Dendritic cell treated with granulocyte-macrophage colony-stimulating factor and Interleukin-4, amounts not matched to agents 40 ng/mL and 50 ng/mL, for 4 days (primary cell): ENCODE measurements at regions of chr21 and their contacts with region 1.

Region 1: DNA sequence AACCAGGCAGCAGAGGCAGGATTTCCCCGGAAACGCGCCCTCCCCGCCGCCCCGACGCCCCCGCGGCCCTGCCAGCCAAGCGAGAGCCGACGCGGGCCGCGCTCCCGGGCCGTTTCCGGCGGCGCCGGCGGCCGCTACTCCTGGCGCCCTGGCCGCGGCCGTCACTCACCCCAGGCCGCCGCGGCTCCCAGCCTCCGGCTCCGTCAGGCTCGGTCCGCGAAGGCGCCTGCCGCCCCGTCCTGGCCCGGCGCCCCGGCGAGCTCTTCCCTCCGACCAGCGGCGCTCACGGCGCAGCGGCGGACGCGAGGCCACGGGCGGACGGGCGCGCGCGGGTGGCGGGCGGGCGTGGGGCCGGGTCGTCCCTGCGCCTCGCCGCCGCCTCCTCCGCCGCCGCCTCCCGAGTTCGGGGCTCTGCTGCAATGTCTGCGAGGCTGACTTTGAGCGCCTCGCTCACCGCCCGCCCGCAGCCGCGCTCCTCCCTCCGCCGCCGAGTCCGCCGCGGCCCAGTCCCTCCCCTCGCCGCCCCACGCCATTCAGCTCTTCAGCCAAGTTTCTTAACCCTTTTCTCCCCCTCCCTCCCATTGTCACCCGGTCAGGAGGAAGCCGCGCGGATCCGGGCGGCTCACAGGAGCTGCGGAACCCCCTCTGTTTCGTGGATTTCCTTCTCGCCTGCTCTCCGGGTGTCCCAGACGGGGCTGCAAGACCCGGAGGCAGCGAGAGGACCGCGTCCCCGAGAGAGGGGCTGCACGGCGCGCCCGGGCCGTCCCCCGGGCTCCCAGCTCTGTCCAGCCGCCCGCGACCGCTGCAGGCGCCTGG is at the start of gene NRIP1:
- H3K4me3 Mint-ChIP-seq: peak within 1 kb of the TSS; percentile 91
- H3K27ac Mint-ChIP-seq: peak within 1 kb of the TSS; percentile 86
- H3K4me1 Mint-ChIP-seq: peaks cover 48% of the 10 kb centered on the region
- H3K27me3 Mint-ChIP-seq: no peaks in the 10 kb centered on the region

Region 2: DNA sequence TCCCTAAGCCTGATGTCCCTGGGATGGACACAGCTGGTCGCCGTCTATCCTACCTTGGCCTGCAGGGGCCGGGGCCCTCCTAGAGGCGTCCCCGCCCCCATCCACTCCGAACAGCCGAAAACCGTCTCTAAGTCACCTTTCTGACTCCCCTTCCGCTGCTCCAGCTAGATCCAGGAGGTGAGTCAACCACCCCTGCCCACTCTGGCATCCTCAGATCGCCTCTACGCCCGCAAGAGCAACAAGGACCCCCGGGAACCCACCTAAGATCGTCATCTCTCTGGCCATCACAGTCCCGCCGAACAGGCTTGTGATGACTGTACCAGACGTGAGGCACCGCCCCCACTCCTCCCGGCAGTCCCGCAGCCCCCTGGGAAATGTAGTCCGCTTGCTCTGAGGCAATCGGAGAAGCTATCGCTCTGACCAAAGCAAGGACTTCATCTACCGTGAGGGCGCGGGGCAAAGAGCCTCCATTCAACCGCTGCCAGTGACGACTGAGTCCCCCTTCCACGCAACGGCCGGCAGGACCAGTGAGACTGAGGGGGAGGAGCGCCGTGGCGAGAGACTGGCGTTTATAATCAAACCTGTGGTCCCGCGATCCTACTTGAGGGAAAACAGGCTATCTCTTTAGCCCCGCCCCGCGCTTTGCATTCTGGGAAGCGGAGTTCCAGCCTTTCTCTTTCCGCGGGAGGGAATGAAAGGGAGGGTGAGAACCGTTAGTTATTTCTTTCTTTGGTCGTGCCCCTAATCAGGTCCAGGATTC is 681.8 kb before region 1 on chr21 and contains the start of gene HSPA13:
- intact Hi-C with region 1: loop called (anchors 2 kb)
- H3K4me3 Mint-ChIP-seq: peak within 1 kb of the TSS; percentile 100
- H3K27ac Mint-ChIP-seq: peak within 1 kb of the TSS; percentile 97
- H3K4me1 Mint-ChIP-seq: peaks cover 21% of the 10 kb centered on the region
- H3K27me3 Mint-ChIP-seq: no peaks in the 10 kb centered on the region

Region 3: DNA sequence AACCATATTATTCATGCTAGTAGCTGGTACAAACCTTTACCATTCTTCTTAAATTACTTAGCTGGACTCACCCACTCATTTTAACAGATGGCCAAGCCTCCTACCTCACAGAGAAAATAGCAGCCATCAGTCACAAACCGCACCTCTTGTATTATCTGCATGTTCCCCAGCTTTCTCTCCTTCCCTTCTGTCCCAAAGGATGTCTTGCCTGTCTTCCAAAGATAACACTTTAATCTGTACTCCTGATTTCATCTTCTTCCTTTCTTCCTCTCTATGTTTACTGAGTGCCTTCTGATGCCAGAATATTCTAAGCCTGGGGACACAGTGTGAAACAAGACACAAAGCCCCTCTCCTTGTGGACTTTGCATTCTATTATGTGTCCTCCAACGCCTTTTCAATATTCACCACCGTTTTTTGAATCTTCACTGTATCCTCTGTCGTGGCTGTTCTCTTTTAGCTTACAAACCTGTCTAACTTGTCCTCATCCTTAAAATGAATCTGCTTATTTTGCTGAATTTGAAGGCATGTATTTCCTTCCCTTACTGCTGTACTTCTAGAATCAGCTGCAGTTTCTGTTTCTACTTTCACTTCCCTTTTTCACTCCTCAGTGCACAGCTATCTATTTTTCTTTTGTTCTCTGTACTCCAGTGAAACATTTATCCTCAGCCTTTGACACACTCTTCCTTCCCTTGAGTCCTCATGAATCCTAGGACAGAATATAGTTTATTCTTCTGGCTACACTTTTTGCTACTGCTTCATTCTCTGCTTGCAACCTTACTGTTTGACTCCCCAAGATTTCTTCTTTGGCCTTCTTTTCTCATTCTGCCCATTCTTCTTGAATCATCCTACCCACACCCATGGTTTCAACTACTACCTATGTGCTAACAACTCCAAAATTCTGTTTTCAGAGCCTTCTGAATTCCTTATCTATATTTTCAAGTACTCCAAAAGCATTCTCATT is 301.8 kb before region 1 on chr21:
- intact Hi-C with region 1: loop called (anchors 10 kb)
- H3K4me3 Mint-ChIP-seq: no peak overlapping the region
- H3K27ac Mint-ChIP-seq: no peak overlapping the region
- H3K4me1 Mint-ChIP-seq: peaks cover 6% of the 10 kb centered on the region
- H3K27me3 Mint-ChIP-seq: no peaks in the 10 kb centered on the region

Region 4: DNA sequence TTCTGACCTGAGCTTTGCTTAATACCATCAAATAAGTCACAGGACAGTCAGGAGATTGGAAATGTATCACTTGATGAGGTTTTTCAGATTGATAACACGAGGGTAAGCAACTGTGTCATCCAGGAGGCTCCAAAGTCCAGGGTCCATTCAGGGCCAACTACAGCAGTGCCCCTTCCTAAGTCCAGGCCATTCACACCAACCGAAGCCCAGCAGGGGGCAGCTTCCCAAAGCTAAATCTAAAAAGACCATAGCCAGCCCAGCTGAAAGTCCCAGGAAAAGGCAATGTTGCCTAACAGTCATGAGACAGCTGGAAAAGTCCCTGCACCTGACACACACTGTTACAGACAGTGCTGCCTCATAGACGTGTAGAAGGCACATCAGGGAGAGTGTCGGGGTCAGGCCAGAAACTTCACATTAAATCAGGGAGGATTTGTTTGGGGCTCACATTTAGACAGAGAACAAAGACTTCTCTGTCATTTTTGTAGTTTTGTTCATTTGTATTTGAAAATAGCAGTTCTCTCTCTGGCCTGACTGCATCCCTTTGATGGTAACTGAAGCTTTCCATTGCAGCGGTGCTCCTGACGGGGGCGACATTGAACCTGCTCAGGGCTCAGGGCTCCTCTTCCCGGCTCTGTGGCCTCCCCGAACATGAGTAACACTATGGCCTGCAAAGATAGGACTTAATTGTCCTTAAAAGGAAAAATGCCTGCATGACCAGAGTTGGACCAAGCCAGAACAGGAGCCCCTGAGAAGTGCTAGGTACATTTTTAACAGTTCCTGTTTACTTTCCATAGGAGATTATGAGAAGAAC is 200.4 kb before region 1 on chr21:
- intact Hi-C with region 1: loop called (anchors 2 kb)
- H3K4me3 Mint-ChIP-seq: no peak overlapping the region
- H3K27ac Mint-ChIP-seq: peak overlapping the region; percentile 32
- H3K4me1 Mint-ChIP-seq: peaks cover 55% of the 10 kb centered on the region
- H3K27me3 Mint-ChIP-seq: no peaks in the 10 kb centered on the region

Region 5: DNA sequence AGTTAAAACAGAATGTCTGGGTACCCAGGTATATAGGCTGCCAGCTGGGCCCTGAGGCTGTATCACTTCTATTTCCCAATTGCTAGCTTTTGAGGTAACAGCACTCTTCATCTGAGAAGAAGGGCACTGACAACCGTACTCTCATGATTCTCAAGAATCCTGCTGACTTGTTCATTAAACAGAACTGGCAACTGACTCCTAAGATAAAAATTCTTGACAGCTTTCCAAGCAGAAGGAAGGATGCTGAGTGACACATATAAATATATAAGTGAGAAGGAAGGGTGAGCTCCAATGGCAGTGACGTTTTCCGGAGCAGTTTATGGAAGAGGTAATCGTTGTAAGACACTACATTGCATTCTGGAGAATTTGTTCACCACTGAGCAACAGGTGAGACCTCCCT is 48.1 kb after region 1 on chr21:
- intact Hi-C with region 1: no loop called
- H3K4me3 Mint-ChIP-seq: no peak overlapping the region
- H3K27ac Mint-ChIP-seq: no peak overlapping the region
- H3K4me1 Mint-ChIP-seq: peaks cover 6% of the 10 kb centered on the region
- H3K27me3 Mint-ChIP-seq: no peaks in the 10 kb centered on the region

Region 6: GRCh38 chr21:15221799-15222386 is 157.1 kb after region 1 on chr21:
- intact Hi-C with region 1: loop called (anchors 5 kb)
- H3K4me3 Mint-ChIP-seq: no peak overlapping the region
- H3K27ac Mint-ChIP-seq: no peak overlapping the region
- H3K4me1 Mint-ChIP-seq: peaks cover 49% of the 10 kb centered on the region
- H3K27me3 Mint-ChIP-seq: peaks cover 33% of the 10 kb centered on the region

Region 7: DNA sequence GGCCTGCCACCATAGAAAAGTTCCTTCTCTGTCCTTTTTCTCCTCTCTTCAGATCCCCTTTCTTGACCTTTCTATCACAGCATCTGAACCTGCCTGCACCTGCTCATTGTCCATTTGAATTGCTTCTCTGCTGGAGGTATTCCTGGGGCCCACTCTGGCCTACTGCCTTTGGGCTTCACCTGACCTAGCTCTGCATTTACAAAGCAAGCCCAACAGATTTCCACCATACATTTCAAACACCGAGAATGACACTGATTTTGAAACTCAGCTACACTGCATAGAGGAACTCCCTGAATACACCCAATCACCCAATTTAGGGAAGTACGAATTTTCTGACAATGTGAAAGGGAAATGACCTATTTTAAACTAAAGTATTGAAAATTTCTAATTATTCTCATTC is 380.5 kb after region 1 on chr21:
- intact Hi-C with region 1: loop called (anchors 10 kb)
- H3K4me3 Mint-ChIP-seq: peak overlapping the region; percentile 62
- H3K27ac Mint-ChIP-seq: peak overlapping the region; percentile 86
- H3K4me1 Mint-ChIP-seq: peaks cover 38% of the 10 kb centered on the region
- H3K27me3 Mint-ChIP-seq: no peaks in the 10 kb centered on the region

Region 8: DNA sequence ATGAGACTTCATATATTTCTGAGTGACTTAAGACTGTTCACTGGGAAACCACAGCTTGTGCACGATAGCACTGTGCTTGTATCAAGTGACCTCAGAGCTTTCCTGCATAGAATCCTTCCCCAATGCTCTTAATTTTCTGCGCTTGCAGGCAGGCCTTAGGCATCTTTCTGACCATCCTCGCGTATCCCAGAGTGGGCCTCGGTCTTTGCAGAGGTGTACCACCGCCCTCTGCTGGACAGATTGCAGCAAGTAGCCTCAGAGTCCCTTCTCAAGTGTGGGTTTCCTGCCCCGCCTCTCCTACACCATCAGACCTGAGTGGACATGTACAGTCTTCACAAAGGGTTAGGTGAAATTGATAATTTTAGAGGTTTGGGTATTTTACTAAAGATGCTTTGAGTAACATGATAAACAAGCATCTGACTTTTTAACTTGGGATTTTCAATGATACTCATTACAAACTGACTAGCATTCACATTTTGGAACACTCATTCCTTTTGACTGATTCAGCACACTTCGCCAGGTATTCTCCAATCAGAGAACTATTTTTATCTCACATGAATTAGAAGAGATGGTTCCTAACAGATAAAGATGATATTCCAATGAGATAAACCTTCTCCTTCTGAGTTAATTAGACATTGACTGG is 418.5 kb after region 1 on chr21:
- intact Hi-C with region 1: loop called (anchors 2 kb)
- H3K4me3 Mint-ChIP-seq: no peak overlapping the region
- H3K27ac Mint-ChIP-seq: no peak overlapping the region
- H3K4me1 Mint-ChIP-seq: no peaks in the 10 kb centered on the region
- H3K27me3 Mint-ChIP-seq: no peaks in the 10 kb centered on the region